Activated CD4-positive, alpha-beta memory T cell treated with anti-CD3 and anti-CD28 coated beads for 36 hours (primary cell): ENCODE measurements at regions of chr11 and their contacts with region 1.

Region 1: GRCh38 chr11:28123151-28123581 is 15.0 kb downstream of the METTL15 start:
- DNase-seq: no peak
- H3K4me3 Mint-ChIP-seq: no peak overlapping the region
- H3K27ac Mint-ChIP-seq: no peak overlapping the region
- H3K4me1 Mint-ChIP-seq: peaks cover 5% of the 10 kb centered on the region
- H3K27me3 Mint-ChIP-seq: no peaks in the 10 kb centered on the region

Region 2: DNA sequence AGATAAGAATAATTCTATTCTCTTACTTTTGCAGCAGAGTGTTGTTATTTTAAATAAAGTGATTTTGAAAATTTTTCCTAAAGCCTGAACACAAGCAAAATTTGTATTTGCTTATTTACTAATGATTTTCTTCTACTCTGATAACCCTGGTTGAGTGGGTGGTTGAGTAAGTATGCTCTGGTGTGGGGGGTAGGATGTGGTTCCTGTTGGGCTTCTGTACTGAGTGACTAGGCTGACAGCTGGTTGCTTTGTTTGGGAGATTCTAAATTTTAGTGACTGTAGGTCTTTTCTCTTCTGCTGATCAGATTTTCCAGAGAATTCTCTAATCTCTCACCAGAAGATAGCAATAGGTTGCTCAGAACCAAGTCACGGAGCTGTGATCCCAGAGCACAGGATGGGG is 46.6 kb after region 1 on chr11:
- CTCF ChIA-PET with region 1: no interaction called
- POLR2A ChIA-PET with region 1: no interaction called
- intact Hi-C with region 1: loop called (anchors 2 kb)
- DNase-seq: no peak
- H3K4me3 Mint-ChIP-seq: no peak overlapping the region
- H3K27ac Mint-ChIP-seq: no peak overlapping the region
- H3K4me1 Mint-ChIP-seq: peaks cover 9% of the 10 kb centered on the region
- H3K27me3 Mint-ChIP-seq: no peaks in the 10 kb centered on the region

Region 3: GRCh38 chr11:28209906-28210305 is 86.7 kb after region 1 on chr11:
- CTCF ChIA-PET with region 1: no interaction called
- POLR2A ChIA-PET with region 1: no interaction called
- intact Hi-C with region 1: no loop called
- DNase-seq: no peak
- H3K4me3 Mint-ChIP-seq: no peak overlapping the region
- H3K27ac Mint-ChIP-seq: no peak overlapping the region
- H3K4me1 Mint-ChIP-seq: no peaks in the 10 kb centered on the region
- H3K27me3 Mint-ChIP-seq: no peaks in the 10 kb centered on the region